ENCODE measurements at regions of chr12 and their contacts with region 1.

Region 1: GRCh38 chr12:51424662-51425438 is at the start of gene SLC4A8:
- DNase-seq: peak; percentile 62 to 74 (median 66)
- H3K4me3 ChIP-seq: peak within 1 kb of the TSS; percentile 4 to 51
- H3K4me3 Mint-ChIP-seq: peak within 1 kb of the TSS; percentile 80 to 88 (median 86)
- H3K27ac ChIP-seq: peak within 1 kb of the TSS; percentile 8
- H3K27ac Mint-ChIP-seq: peak within 1 kb of the TSS in 5 of 7 donors; percentile 72 to 88 (median 85)
- H3K4me1 ChIP-seq: peaks cover 6% of the 10 kb centered on the region
- H3K4me1 Mint-ChIP-seq: peaks cover 9 to 10% (median 10%) of the 10 kb centered on the region in 4 donors
- H3K27me3 ChIP-seq: no peaks in the 10 kb centered on the region
- H3K27me3 Mint-ChIP-seq: no peaks in the 10 kb centered on the region
- total RNA-seq, gene SLC4A8: 0.47 to 0.69 TPM

Region 2: GRCh38 chr12:51482929-51483697 is 58.3 kb after region 1 on chr12:
- CTCF ChIA-PET with region 1: interaction called, 3 read pairs
- POLR2A ChIA-PET with region 1: no interaction called
- intact Hi-C with region 1: loop called (anchors 2 kb)
- DNase-seq: peak in 4 of 5 donors; percentile 10 to 34 (median 28)
- H3K4me3 ChIP-seq: no peak overlapping the region
- H3K4me3 Mint-ChIP-seq: peak overlapping the region; percentile 56 to 88 (median 73)
- H3K27ac ChIP-seq: no peak overlapping the region
- H3K27ac Mint-ChIP-seq: peak overlapping the region; percentile 59 to 92 (median 84)
- H3K4me1 ChIP-seq: peaks cover 30% of the 10 kb centered on the region
- H3K4me1 Mint-ChIP-seq: peaks cover 22 to 38% (median 29%) of the 10 kb centered on the region in 4 donors
- H3K27me3 ChIP-seq: no peaks in the 10 kb centered on the region
- H3K27me3 Mint-ChIP-seq: no peaks in the 10 kb centered on the region

Region 3: GRCh38 chr12:51521554-51522276 is 96.9 kb after region 1 on chr12:
- CTCF ChIA-PET with region 1: no interaction called
- POLR2A ChIA-PET with region 1: no interaction called
- intact Hi-C with region 1: no loop called
- DNase-seq: no peak
- H3K4me3 ChIP-seq: no peak overlapping the region
- H3K4me3 Mint-ChIP-seq: no peak overlapping the region
- H3K27ac ChIP-seq: no peak overlapping the region
- H3K27ac Mint-ChIP-seq: no peak overlapping the region
- H3K4me1 ChIP-seq: no peaks in the 10 kb centered on the region
- H3K4me1 Mint-ChIP-seq: no peaks in the 10 kb centered on the region
- H3K27me3 ChIP-seq: no peaks in the 10 kb centered on the region
- H3K27me3 Mint-ChIP-seq: peaks cover 0 to 2% of the 10 kb centered on the region in 2 donors

Region 4: GRCh38 chr12:51879102-51879501 is 454.3 kb after region 1 on chr12:
- CTCF ChIA-PET with region 1: interaction called, 3 read pairs
- POLR2A ChIA-PET with region 1: no interaction called
- intact Hi-C with region 1: loop called (anchors 5 kb)
- DNase-seq: no peak
- H3K4me3 ChIP-seq: no peak overlapping the region
- H3K4me3 Mint-ChIP-seq: no peak overlapping the region
- H3K27ac ChIP-seq: no peak overlapping the region
- H3K27ac Mint-ChIP-seq: no peak overlapping the region
- H3K4me1 ChIP-seq: no peaks in the 10 kb centered on the region
- H3K4me1 Mint-ChIP-seq: no peaks in the 10 kb centered on the region
- H3K27me3 ChIP-seq: no peaks in the 10 kb centered on the region
- H3K27me3 Mint-ChIP-seq: peaks cover 3 to 9% of the 10 kb centered on the region in 2 donors

Measured in CD4-positive, alpha-beta memory T cell (primary cell).